ENCODE measurements at regions of chr17 and their contacts with region 1.

Region 1: DNA sequence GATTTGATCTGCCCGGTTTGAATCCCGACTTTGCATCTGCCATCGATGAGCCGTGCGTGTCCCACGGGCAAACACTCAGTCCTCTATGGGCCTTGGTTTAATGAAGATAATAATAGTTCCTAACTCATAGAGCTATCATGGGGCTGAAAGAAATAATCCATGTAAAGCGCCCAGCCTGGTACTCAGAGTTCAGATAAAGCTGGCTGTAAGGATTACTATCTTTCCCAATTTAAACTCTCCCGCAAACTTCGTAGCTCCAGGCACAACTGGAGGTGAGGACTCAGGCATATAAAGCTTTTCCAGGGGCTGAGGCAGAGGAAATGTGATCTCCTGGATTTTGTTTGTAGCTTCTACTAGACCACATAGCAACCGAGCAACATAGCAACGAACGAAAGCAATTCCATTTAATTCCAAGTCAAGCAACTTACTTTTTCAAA is 16.3 kb downstream of the ALOX15 start:
- DNase-seq: no peak
- ATAC-seq: peak in 1 of 2 donors; percentile 78
- H3K4me3 ChIP-seq: no peak overlapping the region
- H3K27ac ChIP-seq: no peak overlapping the region
- H3K4me1 ChIP-seq: peaks cover 5% of the 10 kb centered on the region
- H3K27me3 ChIP-seq: no peaks in the 10 kb centered on the region
- CTCF ChIP-seq: no peak

Region 2: DNA sequence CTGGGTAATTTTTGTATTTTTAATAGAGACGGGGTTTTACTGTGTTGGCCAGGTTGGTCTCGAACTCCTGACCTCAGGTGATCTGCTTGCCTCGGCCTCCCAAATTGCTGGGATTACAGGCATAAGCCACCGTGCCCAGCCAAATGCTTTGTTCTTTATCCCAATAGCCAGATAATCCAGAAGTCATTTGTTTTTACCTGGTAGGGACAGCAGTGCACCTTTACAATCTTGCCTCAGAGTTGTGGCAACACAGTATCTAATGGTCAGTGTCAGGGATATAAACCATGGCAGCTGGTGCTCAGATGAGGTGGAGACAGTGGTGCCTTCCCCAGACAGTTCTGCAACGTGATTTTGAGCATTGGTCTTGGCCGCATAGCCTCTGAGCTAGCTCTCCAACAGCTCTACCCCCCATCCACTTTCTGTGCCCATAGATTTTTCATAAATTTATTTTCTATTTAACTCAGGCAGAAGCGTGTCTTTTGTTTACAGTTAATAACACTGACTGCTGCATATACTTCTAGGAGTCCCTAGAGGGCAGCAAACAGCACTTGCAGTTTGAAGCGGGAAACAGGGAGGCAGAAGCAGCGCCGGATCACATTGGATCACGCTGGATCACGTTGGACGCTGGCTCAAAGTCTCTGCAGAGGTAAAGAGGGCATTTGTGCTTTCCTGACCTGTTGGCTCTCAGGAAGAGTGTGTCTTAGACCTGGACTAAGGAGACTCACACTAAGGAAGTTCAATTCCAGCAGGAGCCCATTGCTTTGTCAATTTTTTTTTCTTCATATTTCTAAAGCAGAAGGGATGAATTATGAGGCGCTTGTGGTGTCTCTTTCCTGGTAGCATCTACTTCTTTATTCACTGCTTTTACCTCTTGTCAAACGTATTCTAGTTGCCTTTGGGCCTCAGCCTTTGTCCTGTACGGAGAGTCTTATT is 59.7 kb before region 1 on chr17:
- intact Hi-C with region 1: loop called (anchors 10 kb)
- DNase-seq: peak; percentile 73
- ATAC-seq: peak; percentile 91 to 92
- H3K4me3 ChIP-seq: no peak overlapping the region
- H3K27ac ChIP-seq: no peak overlapping the region
- H3K4me1 ChIP-seq: peaks cover 22% of the 10 kb centered on the region
- H3K27me3 ChIP-seq: no peaks in the 10 kb centered on the region
- CTCF ChIP-seq: peak; percentile 78